Tibial artery (tissue), 4 donors: ENCODE measurements at regions of chr18 and their contacts with region 1.

Region 1: DNA sequence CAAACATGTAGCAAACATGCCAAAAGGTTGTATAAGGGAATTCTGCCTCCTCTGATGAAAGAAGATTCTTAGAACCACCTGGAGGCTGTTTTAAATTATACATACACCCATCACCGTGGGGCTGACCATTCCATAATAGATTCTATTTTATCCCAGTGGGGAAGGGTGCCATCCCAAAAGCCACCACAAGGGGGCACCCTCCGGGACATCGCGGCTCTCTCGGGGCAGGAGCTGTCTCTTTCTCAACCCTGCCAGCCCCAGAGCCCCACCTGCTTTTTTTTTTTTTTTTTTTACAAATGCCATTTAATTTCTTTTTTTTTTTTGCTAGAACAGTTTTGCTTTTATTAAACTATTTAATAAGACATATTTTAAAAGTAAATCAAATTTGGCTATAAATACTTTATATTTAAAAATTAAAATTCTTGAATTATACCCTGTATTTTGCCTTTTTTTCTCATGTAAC is 8.6 kb upstream of the MTCL1 start:
- DNase-seq: peak; percentile 75 to 85
- H3K4me3 ChIP-seq: no peak overlapping the region
- H3K27ac ChIP-seq: no peak overlapping the region
- H3K4me1 ChIP-seq: no peaks in the 10 kb centered on the region
- H3K27me3 ChIP-seq: no peaks in the 10 kb centered on the region
- CTCF ChIP-seq: peak; percentile 76 to 81

Region 2: GRCh38 chr18:8988261-8988871 is 291.6 kb after region 1 on chr18:
- intact Hi-C with region 1: loop called (anchors 2 kb)
- DNase-seq: peak; percentile 38 to 73
- H3K4me3 ChIP-seq: no peak overlapping the region
- H3K27ac ChIP-seq: no peak overlapping the region
- H3K4me1 ChIP-seq: peaks cover 0 to 4% (median 0%) of the 10 kb centered on the region in 4 donors
- H3K27me3 ChIP-seq: no peaks in the 10 kb centered on the region
- CTCF ChIP-seq: peak; percentile 55 to 70